CD8-positive, alpha-beta T cell (primary cell): ENCODE measurements at regions of chr5 and their contacts with region 1.

Region 1: DNA sequence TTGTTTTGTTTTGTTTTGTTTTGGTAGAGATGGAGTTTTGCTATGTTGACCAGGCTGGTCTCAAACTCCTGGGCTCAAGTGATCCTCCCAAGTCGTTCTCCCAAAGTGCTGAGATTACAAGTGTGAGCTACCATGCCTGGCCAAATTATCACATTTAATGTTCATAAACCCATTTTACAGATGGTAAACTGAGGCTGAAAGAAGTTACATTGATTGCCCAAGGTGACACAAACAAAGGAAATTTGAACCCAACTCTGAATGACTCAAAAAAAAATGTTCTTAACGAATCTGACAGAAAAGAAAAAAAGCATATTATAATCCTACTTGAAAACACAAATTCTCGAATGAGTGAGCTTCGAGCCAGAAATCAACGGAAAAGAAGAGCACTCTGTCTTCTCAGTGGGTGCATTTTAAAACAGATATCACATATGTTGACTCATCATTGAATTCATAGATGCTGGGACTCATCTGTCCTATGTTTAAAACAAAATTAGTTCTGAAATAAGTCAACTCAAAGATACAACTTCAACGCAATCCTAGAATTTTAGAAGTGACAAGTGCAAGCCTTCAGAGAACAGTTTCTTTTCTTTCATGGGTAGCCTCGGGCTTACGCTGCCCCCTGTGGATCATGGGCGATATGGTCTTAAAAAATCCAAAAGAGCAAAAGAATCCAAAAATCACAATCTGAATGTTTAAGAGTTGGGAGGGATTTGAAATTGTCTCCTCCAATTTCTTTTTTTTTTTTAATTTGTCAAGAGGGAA is 28.4 kb downstream of the TIMD4 start:
- DNase-seq: peak; percentile 23 to 77 (median 57)
- ATAC-seq: peak; percentile 57
- H3K4me3 ChIP-seq: no peak overlapping the region
- H3K4me3 Mint-ChIP-seq: peak overlapping the region; percentile 65
- H3K27ac ChIP-seq: no peak overlapping the region
- H3K27ac Mint-ChIP-seq: no peak overlapping the region
- H3K4me1 ChIP-seq: peaks cover 32% of the 10 kb centered on the region
- H3K4me1 Mint-ChIP-seq: peaks cover 44% of the 10 kb centered on the region
- H3K27me3 ChIP-seq: no peaks in the 10 kb centered on the region
- H3K27me3 Mint-ChIP-seq: no peaks in the 10 kb centered on the region
- CTCF ChIP-seq: peak; percentile 88

Region 2: DNA sequence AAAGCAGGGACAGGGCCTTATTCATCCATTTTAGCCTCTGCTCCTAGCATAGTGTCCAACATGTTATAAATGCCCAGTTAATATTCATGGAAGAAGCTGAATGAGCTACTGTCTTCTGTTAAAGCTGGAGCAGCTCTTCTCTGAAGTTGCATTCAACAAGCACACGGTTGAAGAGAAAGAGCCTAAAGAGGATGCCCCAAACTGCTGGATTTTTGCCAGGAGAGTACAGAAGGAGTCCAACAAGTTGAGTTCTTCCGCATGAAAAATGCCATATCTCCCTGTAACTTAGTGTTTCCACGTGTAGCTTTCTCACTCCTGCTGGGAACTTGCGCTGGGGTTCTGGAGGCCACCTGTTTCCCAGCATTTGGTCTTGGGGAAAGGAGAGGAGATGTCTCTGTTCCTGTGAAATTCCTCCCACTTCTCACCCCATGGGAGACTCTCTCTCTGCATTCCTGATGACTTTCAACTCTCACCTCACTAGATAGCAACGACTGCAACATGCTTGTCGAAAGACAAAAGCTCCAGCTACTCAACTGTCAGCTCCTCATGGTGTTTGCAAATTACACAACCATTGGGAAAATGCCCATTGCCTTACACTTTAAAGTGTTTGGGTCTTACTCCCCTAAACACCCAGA is 1798.3 kb before region 1 on chr5:
- CTCF ChIA-PET with region 1: no interaction called
- POLR2A ChIA-PET with region 1: no interaction called
- intact Hi-C with region 1: loop called in 1 of 2 experiments (anchors 2 kb)
- DNase-seq: no peak
- ATAC-seq: no peak
- H3K4me3 ChIP-seq: no peak overlapping the region
- H3K4me3 Mint-ChIP-seq: no peak overlapping the region
- H3K27ac ChIP-seq: no peak overlapping the region
- H3K27ac Mint-ChIP-seq: no peak overlapping the region
- H3K4me1 ChIP-seq: no peaks in the 10 kb centered on the region
- H3K4me1 Mint-ChIP-seq: peaks cover 2% of the 10 kb centered on the region
- H3K27me3 ChIP-seq: peaks cover 0 to 5% of the 10 kb centered on the region in 2 experiments
- H3K27me3 Mint-ChIP-seq: peaks cover 30% of the 10 kb centered on the region
- CTCF ChIP-seq: no peak

Region 3: GRCh38 chr5:155943516-155944407 is 990.9 kb before region 1 on chr5:
- CTCF ChIA-PET with region 1: no interaction called
- POLR2A ChIA-PET with region 1: no interaction called
- intact Hi-C with region 1: loop called in 1 of 2 experiments (anchors 2 kb)
- DNase-seq: peak in 6 of 9 experiments; percentile 2 to 65 (median 34)
- ATAC-seq: peak; percentile 48
- H3K4me3 ChIP-seq: no peak overlapping the region
- H3K4me3 Mint-ChIP-seq: no peak overlapping the region
- H3K27ac ChIP-seq: no peak overlapping the region
- H3K27ac Mint-ChIP-seq: no peak overlapping the region
- H3K4me1 ChIP-seq: peaks cover 3% of the 10 kb centered on the region
- H3K4me1 Mint-ChIP-seq: peaks cover 5% of the 10 kb centered on the region
- H3K27me3 ChIP-seq: no peaks in the 10 kb centered on the region
- H3K27me3 Mint-ChIP-seq: peaks cover 9% of the 10 kb centered on the region
- CTCF ChIP-seq: peak; percentile 54

Region 4: GRCh38 chr5:156762771-156763170 is 171.9 kb before region 1 on chr5:
- CTCF ChIA-PET with region 1: no interaction called
- POLR2A ChIA-PET with region 1: no interaction called
- intact Hi-C with region 1: loop called in 1 of 2 experiments (anchors 10 kb)
- DNase-seq: no peak
- ATAC-seq: no peak
- H3K4me3 ChIP-seq: no peak overlapping the region
- H3K4me3 Mint-ChIP-seq: no peak overlapping the region
- H3K27ac ChIP-seq: no peak overlapping the region
- H3K27ac Mint-ChIP-seq: no peak overlapping the region
- H3K4me1 ChIP-seq: no peaks in the 10 kb centered on the region
- H3K4me1 Mint-ChIP-seq: no peaks in the 10 kb centered on the region
- H3K27me3 ChIP-seq: no peaks in the 10 kb centered on the region
- H3K27me3 Mint-ChIP-seq: peaks cover 4% of the 10 kb centered on the region
- CTCF ChIP-seq: no peak

Region 5: GRCh38 chr5:156794687-156795086 is 139.9 kb before region 1 on chr5:
- CTCF ChIA-PET with region 1: no interaction called
- POLR2A ChIA-PET with region 1: no interaction called
- intact Hi-C with region 1: no loop called
- DNase-seq: no peak
- ATAC-seq: no peak
- H3K4me3 ChIP-seq: no peak overlapping the region
- H3K4me3 Mint-ChIP-seq: no peak overlapping the region
- H3K27ac ChIP-seq: no peak overlapping the region
- H3K27ac Mint-ChIP-seq: no peak overlapping the region
- H3K4me1 ChIP-seq: no peaks in the 10 kb centered on the region
- H3K4me1 Mint-ChIP-seq: peaks cover 4% of the 10 kb centered on the region
- H3K27me3 ChIP-seq: peaks cover 0 to 3% of the 10 kb centered on the region in 2 experiments
- H3K27me3 Mint-ChIP-seq: peaks cover 8% of the 10 kb centered on the region
- CTCF ChIP-seq: no peak

Region 6: DNA sequence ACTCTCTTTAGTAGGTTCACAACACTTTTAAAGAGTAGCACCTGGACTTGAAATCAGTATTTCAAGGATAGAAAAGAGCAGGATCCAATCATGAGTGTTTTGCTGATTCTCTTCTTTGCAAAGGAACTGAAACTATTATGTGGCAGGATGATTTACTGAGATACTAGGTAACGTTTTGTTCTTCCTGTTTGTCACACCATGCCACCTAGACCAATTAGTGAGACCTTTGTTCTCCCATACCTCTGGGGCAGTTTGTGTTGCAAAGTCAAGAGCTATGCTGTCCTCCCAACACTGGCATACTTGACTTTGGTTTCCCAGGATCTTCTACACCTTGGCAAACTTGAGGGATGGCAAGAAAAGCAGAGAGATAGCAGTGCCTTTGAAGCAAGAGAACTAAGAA is 41.1 kb before region 1 on chr5:
- CTCF ChIA-PET with region 1: interaction called, 10 read pairs
- POLR2A ChIA-PET with region 1: interaction called, 3 read pairs
- intact Hi-C with region 1: loop called in 1 of 2 experiments (anchors 1 kb)
- DNase-seq: no peak
- ATAC-seq: no peak
- H3K4me3 ChIP-seq: no peak overlapping the region
- H3K4me3 Mint-ChIP-seq: no peak overlapping the region
- H3K27ac ChIP-seq: no peak overlapping the region
- H3K27ac Mint-ChIP-seq: peak overlapping the region; percentile 58
- H3K4me1 ChIP-seq: peaks cover 18% of the 10 kb centered on the region
- H3K4me1 Mint-ChIP-seq: peaks cover 24% of the 10 kb centered on the region
- H3K27me3 ChIP-seq: peaks cover 0 to 3% of the 10 kb centered on the region in 2 experiments
- H3K27me3 Mint-ChIP-seq: no peaks in the 10 kb centered on the region
- CTCF ChIP-seq: no peak

Region 7: GRCh38 chr5:157130925-157131324 is 196.3 kb after region 1 on chr5:
- CTCF ChIA-PET with region 1: interaction called, 10 read pairs
- POLR2A ChIA-PET with region 1: no interaction called
- intact Hi-C with region 1: loop called (anchors 1 kb)
- DNase-seq: no peak
- ATAC-seq: no peak
- H3K4me3 ChIP-seq: no peak overlapping the region
- H3K4me3 Mint-ChIP-seq: no peak overlapping the region
- H3K27ac ChIP-seq: no peak overlapping the region
- H3K27ac Mint-ChIP-seq: no peak overlapping the region
- H3K4me1 ChIP-seq: no peaks in the 10 kb centered on the region
- H3K4me1 Mint-ChIP-seq: peaks cover 26% of the 10 kb centered on the region
- H3K27me3 ChIP-seq: no peaks in the 10 kb centered on the region
- H3K27me3 Mint-ChIP-seq: no peaks in the 10 kb centered on the region
- CTCF ChIP-seq: no peak

Region 8: DNA sequence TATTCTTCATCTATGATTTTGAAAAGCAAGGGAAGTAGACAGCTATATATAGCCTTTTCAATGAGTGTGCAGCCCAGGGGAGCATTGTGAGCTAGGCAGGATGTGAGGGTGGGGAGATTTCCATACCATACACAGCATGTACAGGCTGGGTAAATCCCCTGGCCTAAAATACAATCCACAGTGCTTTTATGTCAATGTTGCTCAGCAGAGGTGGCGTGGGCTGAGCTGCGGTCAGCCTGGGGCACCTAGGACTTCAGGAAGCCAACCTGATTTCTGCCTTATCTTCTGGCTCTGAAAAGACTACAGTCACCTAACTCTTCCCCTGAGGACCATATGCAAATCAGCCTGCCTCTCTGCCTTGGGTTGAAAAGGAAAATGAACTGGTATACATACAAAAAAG is 237.8 kb after region 1 on chr5:
- CTCF ChIA-PET with region 1: no interaction called
- POLR2A ChIA-PET with region 1: no interaction called
- intact Hi-C with region 1: no loop called
- DNase-seq: peak in 8 of 9 experiments; percentile 40 to 93 (median 66)
- ATAC-seq: peak; percentile 96
- H3K4me3 ChIP-seq: peak overlapping the region in 1 of 2 experiments; percentile 4
- H3K4me3 Mint-ChIP-seq: peak overlapping the region; percentile 46
- H3K27ac ChIP-seq: peak overlapping the region; percentile 4 to 59
- H3K27ac Mint-ChIP-seq: peak overlapping the region; percentile 92
- H3K4me1 ChIP-seq: peaks cover 40% of the 10 kb centered on the region
- H3K4me1 Mint-ChIP-seq: peaks cover 65% of the 10 kb centered on the region
- H3K27me3 ChIP-seq: no peaks in the 10 kb centered on the region
- H3K27me3 Mint-ChIP-seq: no peaks in the 10 kb centered on the region
- CTCF ChIP-seq: no peak

Region 9: GRCh38 chr5:157516626-157517325 is 582.1 kb after region 1 on chr5:
- CTCF ChIA-PET with region 1: no interaction called
- POLR2A ChIA-PET with region 1: no interaction called
- intact Hi-C with region 1: no loop called
- DNase-seq: no peak
- ATAC-seq: no peak
- H3K4me3 ChIP-seq: no peak overlapping the region
- H3K4me3 Mint-ChIP-seq: no peak overlapping the region
- H3K27ac ChIP-seq: no peak overlapping the region
- H3K27ac Mint-ChIP-seq: no peak overlapping the region
- H3K4me1 ChIP-seq: no peaks in the 10 kb centered on the region
- H3K4me1 Mint-ChIP-seq: no peaks in the 10 kb centered on the region
- H3K27me3 ChIP-seq: no peaks in the 10 kb centered on the region
- H3K27me3 Mint-ChIP-seq: no peaks in the 10 kb centered on the region
- CTCF ChIP-seq: no peak